ENCODE measurements at regions of chr2 and their contacts with region 1.

Region 1: DNA sequence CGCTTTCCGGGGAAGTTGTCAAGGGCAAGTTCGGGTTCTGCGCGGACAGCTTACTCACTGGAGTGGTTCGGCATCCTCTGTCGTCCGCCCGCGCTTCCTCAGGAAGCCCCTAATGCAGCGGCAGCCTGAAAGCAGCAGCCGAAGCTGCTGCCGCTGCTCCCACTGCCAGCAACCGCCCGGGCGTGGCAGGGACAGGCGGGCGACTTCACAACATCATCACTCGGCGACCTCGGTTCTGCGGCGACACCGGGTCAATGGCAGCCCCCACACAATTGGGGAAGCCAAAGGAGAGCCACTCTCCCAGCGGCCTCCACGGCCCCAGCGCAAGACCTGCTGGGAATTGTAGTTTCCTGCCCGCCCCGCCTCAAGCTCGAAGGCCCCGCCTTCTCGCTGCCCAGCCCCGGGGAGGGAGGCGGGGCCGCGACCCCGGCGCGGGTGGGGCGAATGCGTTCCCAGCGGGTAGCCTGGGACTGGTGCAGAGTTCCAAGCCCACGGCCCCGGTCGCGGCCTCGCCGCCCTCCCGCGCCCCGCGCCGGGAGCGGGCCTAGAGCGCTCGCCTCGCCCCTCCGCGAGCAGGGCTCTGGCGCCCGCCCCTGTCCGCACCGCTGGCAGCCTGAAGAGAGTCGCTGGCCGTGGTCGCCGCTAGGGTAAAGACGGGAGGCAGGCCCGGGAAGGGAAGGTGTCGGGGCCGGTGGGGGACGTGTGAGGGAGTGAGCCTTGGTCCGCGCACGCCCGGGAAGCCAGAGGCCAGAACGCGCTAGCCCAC is at the starts of genes STRADB and TRAK2:
- DNase-seq: peak; percentile 97
- H3K4me3 ChIP-seq: peak within 1 kb of the TSS; percentile 62 to 98 (median 80)
- H3K27ac ChIP-seq: peak within 1 kb of the TSS; percentile 87 to 95 (median 90)
- H3K4me1 ChIP-seq: peaks cover 0 to 36% (median 29%) of the 10 kb centered on the region in 4 donors
- H3K27me3 ChIP-seq: no peaks in the 10 kb centered on the region
- CTCF ChIP-seq: peak in 3 of 4 experiments; percentile 18 to 46 (median 40)
- EP300 ChIP-seq: no peak
- POLR2A ChIP-seq: peak; percentile 67 to 85
- total RNA-seq, gene STRADB: 14.7 to 32.3 (median 17.1) TPM
- total RNA-seq, gene TRAK2: 46.8 to 68.1 (median 49.1) TPM

Region 2: DNA sequence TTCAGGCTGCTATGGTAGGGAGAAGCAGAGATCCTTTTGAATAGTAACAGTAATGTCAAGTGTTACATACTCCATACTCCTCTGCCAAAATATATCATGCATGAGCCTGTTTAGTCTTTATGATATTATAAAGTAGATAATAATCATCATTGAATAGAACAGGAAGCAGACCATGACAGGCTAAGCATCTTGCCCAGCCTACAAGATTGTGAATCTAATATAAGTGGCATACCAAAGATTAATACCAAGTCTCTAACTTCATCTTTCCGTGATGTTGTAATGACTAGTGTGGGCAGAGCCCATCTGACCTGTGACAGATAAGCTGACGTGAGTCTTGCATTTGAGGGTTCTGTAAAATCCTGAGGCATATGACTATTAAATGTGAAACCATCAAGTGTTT is 366.6 kb before region 1 on chr2:
- intact Hi-C with region 1: no loop called
- DNase-seq: no peak
- H3K4me3 ChIP-seq: no peak overlapping the region
- H3K27ac ChIP-seq: no peak overlapping the region
- H3K4me1 ChIP-seq: no peaks in the 10 kb centered on the region
- H3K27me3 ChIP-seq: no peaks in the 10 kb centered on the region
- CTCF ChIP-seq: no peak
- EP300 ChIP-seq: no peak
- POLR2A ChIP-seq: no peak

Region 3: DNA sequence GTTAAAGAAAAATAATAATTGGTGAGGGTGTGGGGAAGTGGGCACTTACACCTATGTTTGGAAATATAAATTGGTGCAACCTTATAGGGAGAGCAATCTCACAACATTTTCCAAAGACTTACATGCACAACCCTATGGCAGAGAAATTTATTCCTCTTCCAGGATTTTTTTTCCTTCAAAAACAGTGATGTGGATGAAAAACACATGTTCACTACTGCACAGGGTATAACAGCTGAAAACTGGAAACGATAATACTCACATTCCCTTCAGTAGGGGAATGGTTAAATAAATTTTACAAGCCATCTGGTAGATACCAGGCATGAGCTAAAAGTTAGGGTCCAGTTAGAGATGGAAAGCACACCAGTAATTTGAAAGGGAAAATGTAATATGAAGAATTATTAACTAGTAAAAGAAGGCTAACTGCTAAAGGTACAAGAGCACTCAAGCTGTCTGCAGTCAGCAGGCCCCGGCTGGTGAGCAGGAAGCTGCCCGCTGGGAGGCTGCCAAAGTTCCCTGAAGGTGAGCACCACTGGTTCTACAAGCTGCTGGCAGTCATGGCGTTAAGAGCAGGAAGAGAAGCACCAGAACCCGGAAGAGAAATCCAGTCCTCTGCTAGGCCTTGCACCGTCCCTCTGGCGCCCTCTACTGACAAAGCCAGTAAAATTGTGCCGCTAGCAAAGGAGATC is 219.6 kb before region 1 on chr2:
- intact Hi-C with region 1: loop called (anchors 10 kb)
- DNase-seq: peak; percentile 90
- H3K4me3 ChIP-seq: no peak overlapping the region
- H3K27ac ChIP-seq: peak overlapping the region in 3 of 4 donors; percentile 10 to 40 (median 23)
- H3K4me1 ChIP-seq: peaks cover 0 to 26% (median 6%) of the 10 kb centered on the region in 4 donors
- H3K27me3 ChIP-seq: no peaks in the 10 kb centered on the region
- CTCF ChIP-seq: peak; percentile 14 to 74 (median 64)
- EP300 ChIP-seq: no peak
- POLR2A ChIP-seq: no peak

Region 4: DNA sequence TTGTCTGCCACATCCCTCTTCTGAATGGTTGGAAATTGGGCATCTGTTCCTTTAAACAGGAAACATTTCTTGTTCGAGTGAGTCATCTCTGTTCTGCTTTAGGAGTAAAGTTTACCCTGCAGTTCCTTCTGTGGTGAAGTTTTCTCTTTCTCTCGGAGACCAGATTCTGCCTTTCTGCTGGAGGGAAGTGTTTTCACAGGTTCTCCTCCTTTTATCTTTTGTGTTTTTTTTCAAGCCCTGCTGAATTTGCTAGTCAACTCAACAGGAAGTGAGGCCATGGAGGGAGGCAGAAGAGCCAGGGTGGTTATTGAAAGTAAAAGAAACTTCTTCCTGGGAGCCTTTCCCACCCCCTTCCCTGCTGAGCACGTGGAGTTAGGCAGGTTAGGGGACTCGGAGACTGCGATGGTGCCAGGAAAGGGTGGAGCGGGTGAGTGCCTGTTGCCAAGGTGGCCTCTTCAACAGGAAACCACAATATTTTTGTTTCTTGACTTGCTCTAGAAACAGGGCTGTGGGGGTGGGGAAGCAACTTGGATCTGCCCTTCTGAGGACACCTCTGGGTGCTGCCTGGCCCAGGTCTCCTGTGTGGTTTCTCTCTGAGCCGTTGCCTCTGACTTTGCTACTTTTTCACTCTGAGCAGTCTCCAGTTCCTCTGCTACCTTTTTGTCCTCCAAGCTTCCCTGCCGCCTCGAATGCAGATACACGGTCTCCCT is 193.4 kb before region 1 on chr2:
- intact Hi-C with region 1: loop called (anchors 2 kb)
- DNase-seq: peak; percentile 79
- H3K4me3 ChIP-seq: peak overlapping the region; percentile 50 to 73 (median 68)
- H3K27ac ChIP-seq: peak overlapping the region; percentile 83 to 87 (median 85)
- H3K4me1 ChIP-seq: peaks cover 0 to 21% (median 11%) of the 10 kb centered on the region in 4 donors
- H3K27me3 ChIP-seq: no peaks in the 10 kb centered on the region
- CTCF ChIP-seq: no peak
- EP300 ChIP-seq: no peak
- POLR2A ChIP-seq: no peak

Region 5: GRCh38 chr2:201344663-201345366 is 106.7 kb before region 1 on chr2:
- intact Hi-C with region 1: no loop called
- DNase-seq: no peak
- H3K4me3 ChIP-seq: no peak overlapping the region
- H3K27ac ChIP-seq: no peak overlapping the region
- H3K4me1 ChIP-seq: peaks cover 0 to 4% (median 0%) of the 10 kb centered on the region in 4 donors
- H3K27me3 ChIP-seq: no peaks in the 10 kb centered on the region
- CTCF ChIP-seq: no peak
- EP300 ChIP-seq: no peak
- POLR2A ChIP-seq: no peak

Region 6: GRCh38 chr2:201363857-201364560 is 87.5 kb before region 1 on chr2:
- intact Hi-C with region 1: no loop called
- DNase-seq: no peak
- H3K4me3 ChIP-seq: no peak overlapping the region
- H3K27ac ChIP-seq: no peak overlapping the region
- H3K4me1 ChIP-seq: no peaks in the 10 kb centered on the region
- H3K27me3 ChIP-seq: no peaks in the 10 kb centered on the region
- CTCF ChIP-seq: peak; percentile 40 to 80 (median 62)
- EP300 ChIP-seq: no peak
- POLR2A ChIP-seq: no peak

Region 7: DNA sequence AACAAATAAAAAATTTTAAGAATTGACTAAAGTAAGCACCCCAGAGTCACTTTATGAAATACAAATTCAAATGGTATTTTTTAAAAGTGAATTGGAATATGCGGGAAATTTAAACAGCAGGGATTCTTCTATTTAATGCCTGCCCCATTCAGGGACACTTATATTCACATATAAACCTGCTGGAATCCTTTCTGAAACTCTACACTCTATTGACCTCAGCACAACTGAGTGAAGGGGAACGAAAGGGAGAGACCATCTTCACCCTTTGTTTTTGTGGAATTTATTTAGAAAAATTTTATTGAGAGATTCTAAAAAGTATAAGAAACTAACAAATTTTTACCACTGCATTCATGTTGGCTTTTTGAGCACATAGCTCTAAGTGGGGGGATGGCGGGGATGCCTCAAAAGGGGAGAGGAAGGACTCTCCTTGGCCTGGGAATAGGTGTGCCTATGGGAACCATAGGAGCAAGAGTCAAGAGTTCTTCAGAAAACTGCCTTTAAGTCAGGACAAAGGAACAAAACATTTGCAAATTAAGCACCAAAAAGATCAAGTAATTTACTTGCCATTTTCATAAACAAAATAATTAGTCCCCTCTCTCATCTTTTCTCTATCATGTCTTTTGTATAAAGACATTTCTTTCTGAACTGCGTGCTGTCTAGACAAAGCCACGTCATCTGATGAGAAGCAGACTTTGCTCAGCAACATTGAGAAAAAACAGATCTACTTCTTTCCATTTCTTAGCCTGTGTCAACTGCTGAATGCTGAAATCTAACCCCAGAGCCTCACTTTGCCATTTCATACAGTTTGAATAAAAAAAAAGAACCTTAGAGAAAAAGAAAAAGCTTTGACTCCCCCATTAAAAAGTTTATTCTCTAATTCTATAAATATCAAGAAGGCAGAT is 72.7 kb before region 1 on chr2:
- intact Hi-C with region 1: loop called (anchors 2 kb)
- DNase-seq: no peak
- H3K4me3 ChIP-seq: no peak overlapping the region
- H3K27ac ChIP-seq: peak overlapping the region in 3 of 4 donors; percentile 66 to 81 (median 80)
- H3K4me1 ChIP-seq: peaks cover 0 to 36% (median 27%) of the 10 kb centered on the region in 4 donors
- H3K27me3 ChIP-seq: no peaks in the 10 kb centered on the region
- CTCF ChIP-seq: no peak
- EP300 ChIP-seq: peak; percentile 10 to 89 (median 62)
- POLR2A ChIP-seq: no peak

Region 8: DNA sequence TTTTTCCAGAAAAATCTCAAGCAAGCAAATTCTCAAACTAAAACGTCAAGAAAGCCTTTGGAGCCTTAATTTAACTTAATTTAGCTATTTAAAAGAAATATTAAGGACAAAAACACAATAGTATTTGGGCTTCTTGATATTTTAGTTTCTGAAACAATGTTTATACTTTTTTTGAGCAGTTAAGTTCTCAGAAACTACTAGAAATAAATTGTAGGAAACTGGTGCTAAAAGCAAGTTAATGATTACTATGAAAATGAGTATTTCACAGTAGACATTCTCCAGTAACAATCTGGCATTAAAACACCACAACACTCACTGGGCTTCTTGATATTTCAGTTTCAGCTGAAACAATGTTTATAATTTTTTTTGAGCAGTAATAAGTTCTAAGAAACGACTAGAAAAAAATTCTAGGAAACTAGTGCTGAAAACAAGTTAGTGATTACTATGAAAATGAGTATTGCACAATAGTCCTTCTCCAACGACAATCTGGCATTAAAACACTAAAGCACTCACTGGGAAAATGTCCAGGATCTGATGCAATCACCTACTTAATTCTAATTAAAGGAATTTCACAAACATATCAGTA is 45.3 kb before region 1 on chr2:
- intact Hi-C with region 1: loop called (anchors 2 kb)
- DNase-seq: no peak
- H3K4me3 ChIP-seq: no peak overlapping the region
- H3K27ac ChIP-seq: peak overlapping the region; percentile 32 to 76 (median 59)
- H3K4me1 ChIP-seq: peaks cover 0 to 55% (median 45%) of the 10 kb centered on the region in 4 donors
- H3K27me3 ChIP-seq: no peaks in the 10 kb centered on the region
- CTCF ChIP-seq: no peak
- EP300 ChIP-seq: no peak
- POLR2A ChIP-seq: no peak

Region 9: DNA sequence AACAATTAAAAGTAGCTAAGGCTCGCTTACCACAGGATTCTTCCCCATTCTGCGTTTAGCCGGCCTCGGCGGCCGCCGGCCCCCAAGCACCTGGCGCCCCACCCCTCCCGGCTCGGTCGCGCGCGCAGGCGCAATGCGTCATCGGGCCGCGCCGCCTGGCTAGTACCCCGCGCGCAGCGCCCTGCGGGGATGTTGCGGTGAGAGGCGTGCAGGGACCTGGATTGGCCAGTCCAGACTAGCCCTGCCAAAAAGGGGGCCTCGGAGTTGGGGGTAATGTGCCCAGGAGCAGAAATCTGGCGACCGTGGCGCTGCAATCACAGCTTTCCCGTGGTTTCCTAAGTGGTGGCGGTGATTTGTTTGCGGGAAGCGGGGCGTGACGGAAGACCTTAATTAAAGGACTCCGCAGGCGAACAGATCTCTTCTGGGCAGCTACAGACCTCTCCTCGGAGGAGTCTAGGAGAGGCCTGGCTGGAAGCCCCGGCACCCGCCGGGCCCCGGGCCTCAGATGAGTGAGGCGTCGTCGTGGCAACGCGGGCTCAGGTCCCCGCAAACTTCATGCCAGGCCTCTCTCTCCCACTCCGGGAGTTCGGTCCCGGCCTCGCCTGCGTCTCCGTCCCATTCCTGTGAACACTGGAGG is 191.2 kb after region 1 on chr2:
- intact Hi-C with region 1: loop called (anchors 5 kb)
- DNase-seq: peak; percentile 89
- H3K4me3 ChIP-seq: peak overlapping the region; percentile 71 to 84 (median 76)
- H3K27ac ChIP-seq: peak overlapping the region; percentile 93 to 96 (median 94)
- H3K4me1 ChIP-seq: peaks cover 0 to 20% (median 18%) of the 10 kb centered on the region in 4 donors
- H3K27me3 ChIP-seq: no peaks in the 10 kb centered on the region
- CTCF ChIP-seq: no peak
- EP300 ChIP-seq: peak in 1 of 4 donors; percentile 2
- POLR2A ChIP-seq: peak; percentile 48 to 80

Region 10: GRCh38 chr2:202592566-202592965 is 1141.1 kb after region 1 on chr2:
- intact Hi-C with region 1: no loop called
- DNase-seq: no peak
- H3K4me3 ChIP-seq: no peak overlapping the region
- H3K27ac ChIP-seq: no peak overlapping the region
- H3K4me1 ChIP-seq: peaks cover 0 to 9% (median 8%) of the 10 kb centered on the region in 4 donors
- H3K27me3 ChIP-seq: no peaks in the 10 kb centered on the region
- CTCF ChIP-seq: no peak
- EP300 ChIP-seq: no peak
- POLR2A ChIP-seq: no peak

Measured in sigmoid colon (tissue), 7 donors.